ENCODE measurements at regions of chr6 and their contacts with region 1.

Region 1: DNA sequence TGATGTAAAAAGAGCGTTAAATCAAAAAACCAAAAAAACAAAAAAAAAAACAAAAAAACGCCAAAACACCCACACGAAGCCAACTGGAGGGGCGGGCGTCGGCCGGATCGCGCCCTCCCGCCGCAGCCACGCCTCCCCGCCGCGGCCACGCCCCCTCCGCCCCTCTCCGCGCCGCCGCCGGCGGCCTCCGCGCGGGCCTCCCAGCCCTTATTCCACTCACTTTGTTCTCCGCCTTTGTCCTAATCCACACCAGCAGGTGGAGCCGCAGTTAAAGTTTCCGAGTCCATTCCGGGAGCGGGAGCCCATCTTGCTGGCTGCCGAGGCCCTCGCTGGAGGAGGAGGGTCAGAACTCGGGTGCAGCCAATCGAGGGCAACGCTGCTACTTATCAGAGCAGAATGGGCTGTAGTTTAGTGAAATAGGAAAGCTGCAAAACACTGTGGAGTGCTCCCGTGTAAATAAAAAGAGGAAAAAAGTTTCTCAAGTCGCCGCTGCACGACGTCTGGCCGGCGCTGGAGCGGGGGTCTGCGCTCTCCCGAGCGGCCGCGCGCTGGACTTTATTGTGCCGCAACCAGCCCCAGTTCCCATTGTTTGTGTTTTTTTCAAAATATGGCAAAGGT is at the start of gene ASF1A:
- DNase-seq: peak; percentile 97
- H3K4me3 ChIP-seq: peak within 1 kb of the TSS; percentile 80
- H3K27ac ChIP-seq: peak within 1 kb of the TSS; percentile 89
- H3K4me1 ChIP-seq: peaks cover 60% of the 10 kb centered on the region
- CTCF ChIP-seq: peak; percentile 68
- total RNA-seq, gene ASF1A: 19.8 and 37.3 TPM in 2 replicates

Region 2: DNA sequence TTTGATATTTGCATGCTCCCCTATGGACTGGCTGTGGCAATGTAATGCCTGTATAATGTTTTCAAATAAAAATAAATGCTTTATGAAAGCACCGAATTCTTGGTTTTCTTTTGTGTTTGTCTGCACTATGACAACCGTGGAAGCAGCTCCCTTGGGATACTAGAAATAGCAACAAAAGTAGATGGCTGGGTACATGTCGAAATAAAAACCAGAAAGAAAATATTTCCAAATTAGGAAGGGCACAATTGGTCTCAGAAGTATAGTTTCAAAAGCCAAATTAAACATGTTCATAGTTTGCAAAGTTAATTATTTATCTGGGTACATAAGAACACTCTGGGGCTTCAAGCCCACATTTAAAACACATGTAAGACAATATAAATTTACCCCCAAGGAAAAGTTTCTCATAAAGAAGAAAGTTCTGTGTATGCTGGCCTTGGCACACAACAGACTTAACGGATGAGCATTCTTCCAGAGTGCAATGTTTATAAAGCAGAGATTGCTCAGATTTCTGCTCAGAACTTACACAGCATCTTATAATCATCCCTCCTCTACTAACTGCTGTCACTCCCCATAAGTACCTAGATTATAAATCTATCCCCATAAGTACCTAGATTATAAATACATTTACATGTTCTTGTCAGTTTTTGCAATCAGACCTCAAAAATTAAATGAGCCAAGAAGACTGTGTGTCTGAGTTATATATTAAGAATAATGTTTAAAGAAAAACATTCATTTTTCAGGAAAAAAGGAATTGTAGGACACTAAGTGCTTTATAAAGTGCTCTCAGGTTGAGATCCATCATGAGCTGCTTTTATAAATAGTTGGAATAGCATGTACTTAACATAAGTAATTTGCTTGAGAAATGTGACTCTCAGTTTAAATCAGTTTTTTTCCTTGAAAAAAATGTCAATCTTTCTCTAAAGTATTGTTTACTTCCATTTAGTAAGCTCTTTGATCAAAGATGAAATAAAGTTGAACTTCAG is 576.0 kb before region 1 on chr6:
- CTCF ChIA-PET with region 1: no interaction called
- POLR2A ChIA-PET with region 1: no interaction called
- intact Hi-C with region 1: no loop called
- DNase-seq: no peak
- H3K4me3 ChIP-seq: no peak overlapping the region
- H3K27ac ChIP-seq: no peak overlapping the region
- H3K4me1 ChIP-seq: no peaks in the 10 kb centered on the region
- CTCF ChIP-seq: no peak

Region 3: GRCh38 chr6:118651282-118652050 is 242.4 kb before region 1 on chr6 and contains the start of gene CEP85L:
- CTCF ChIA-PET with region 1: interaction called, 5 read pairs
- POLR2A ChIA-PET with region 1: no interaction called
- intact Hi-C with region 1: loop called (anchors 2 kb)
- DNase-seq: peak; percentile 93
- H3K4me3 ChIP-seq: peak within 1 kb of the TSS; percentile 81
- H3K27ac ChIP-seq: peak within 1 kb of the TSS; percentile 25
- H3K4me1 ChIP-seq: peaks cover 50% of the 10 kb centered on the region
- CTCF ChIP-seq: 0 out of 2 replicates have a peak, but pooled peaks have one; percentile 4
- total RNA-seq, gene CEP85L: 7.4 and 9.6 TPM in 2 replicates

Region 4: GRCh38 chr6:118791499-118791898 is 102.4 kb before region 1 on chr6:
- CTCF ChIA-PET with region 1: no interaction called
- POLR2A ChIA-PET with region 1: no interaction called
- intact Hi-C with region 1: no loop called
- DNase-seq: no peak
- H3K4me3 ChIP-seq: no peak overlapping the region
- H3K27ac ChIP-seq: no peak overlapping the region
- H3K4me1 ChIP-seq: peaks cover 10% of the 10 kb centered on the region
- CTCF ChIP-seq: no peak

Region 5: DNA sequence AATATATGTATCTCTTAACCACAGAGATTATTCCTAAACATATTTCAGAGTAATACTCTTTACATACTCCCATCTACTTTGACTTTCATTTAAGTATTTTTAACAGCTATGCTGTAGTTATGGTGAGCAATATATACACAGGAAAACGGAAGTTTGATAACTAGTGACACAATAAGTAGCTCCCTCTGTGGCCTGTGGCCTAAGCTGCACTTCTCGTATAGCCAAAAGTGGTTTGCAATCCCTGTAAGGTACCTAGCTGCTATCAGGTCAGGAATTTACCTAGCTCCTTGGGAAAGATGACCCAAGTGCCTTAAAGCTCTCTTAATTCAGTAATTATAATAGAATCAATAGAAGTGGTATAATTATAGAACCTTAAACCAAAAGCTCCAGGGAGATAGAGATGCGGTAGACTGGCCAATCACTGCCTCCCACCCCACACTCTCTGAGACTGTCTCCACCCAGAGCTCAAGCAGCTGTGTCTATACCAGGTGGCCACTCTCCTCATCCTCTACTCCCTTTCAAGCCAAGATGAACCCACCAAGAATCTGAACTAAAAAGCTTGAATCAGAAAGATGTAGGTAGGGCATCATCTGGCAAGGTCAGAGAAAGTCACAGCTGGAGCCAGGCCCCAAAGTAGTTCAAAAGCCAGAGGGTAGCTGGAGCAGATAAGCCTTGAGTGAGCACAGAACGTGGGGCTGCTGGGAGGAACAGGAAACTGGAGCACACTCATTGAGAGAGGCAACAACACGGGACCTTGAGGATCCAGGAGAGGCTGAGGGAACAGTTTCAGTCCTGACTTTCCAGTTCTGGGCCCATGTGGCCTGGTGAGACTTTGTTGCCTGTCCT is 84.9 kb before region 1 on chr6:
- CTCF ChIA-PET with region 1: no interaction called
- POLR2A ChIA-PET with region 1: no interaction called
- intact Hi-C with region 1: loop called (anchors 5 kb)
- DNase-seq: peak; percentile 41
- H3K4me3 ChIP-seq: no peak overlapping the region
- H3K27ac ChIP-seq: no peak overlapping the region
- H3K4me1 ChIP-seq: peaks cover 21% of the 10 kb centered on the region
- CTCF ChIP-seq: peak; percentile 59

Region 6: GRCh38 chr6:118934461-118935330 is 40.8 kb after region 1 on chr6 and contains the start of gene MCM9:
- CTCF ChIA-PET with region 1: no interaction called
- POLR2A ChIA-PET with region 1: interaction called, 6 read pairs
- intact Hi-C with region 1: loop called (anchors 1 kb)
- DNase-seq: peak; percentile 95
- H3K4me3 ChIP-seq: peak within 1 kb of the TSS; percentile 86
- H3K27ac ChIP-seq: peak within 1 kb of the TSS; percentile 78
- H3K4me1 ChIP-seq: peaks cover 10% of the 10 kb centered on the region
- CTCF ChIP-seq: no peak
- total RNA-seq, gene MCM9: 14.6 and 17.4 TPM in 2 replicates

Region 7: GRCh38 chr6:119158057-119158848 is 264.3 kb after region 1 on chr6:
- CTCF ChIA-PET with region 1: no interaction called
- POLR2A ChIA-PET with region 1: no interaction called
- intact Hi-C with region 1: no loop called
- DNase-seq: no peak
- H3K4me3 ChIP-seq: no peak overlapping the region
- H3K27ac ChIP-seq: no peak overlapping the region
- H3K4me1 ChIP-seq: no peaks in the 10 kb centered on the region
- CTCF ChIP-seq: no peak

Region 8: GRCh38 chr6:119442776-119443184 is 548.9 kb after region 1 on chr6:
- CTCF ChIA-PET with region 1: no interaction called
- POLR2A ChIA-PET with region 1: no interaction called
- intact Hi-C with region 1: loop called (anchors 10 kb)
- DNase-seq: peak; percentile 99
- H3K4me3 ChIP-seq: peak overlapping the region; percentile 25
- H3K27ac ChIP-seq: peak overlapping the region; percentile 94
- H3K4me1 ChIP-seq: peaks cover 76% of the 10 kb centered on the region
- CTCF ChIP-seq: no peak